ENCODE measurements at regions of chr21 and their contacts with region 1.

Region 1: GRCh38 chr21:37642493-37642892 is 273.8 kb downstream of the KCNJ6 start:
- DNase-seq: peak; percentile 36
- H3K4me3 ChIP-seq: no peak overlapping the region
- H3K27ac ChIP-seq: no peak overlapping the region
- H3K4me1 ChIP-seq: peaks cover 9% of the 10 kb centered on the region
- H3K27me3 ChIP-seq: no peaks in the 10 kb centered on the region
- CTCF ChIP-seq: peak; percentile 36 to 58

Region 2: DNA sequence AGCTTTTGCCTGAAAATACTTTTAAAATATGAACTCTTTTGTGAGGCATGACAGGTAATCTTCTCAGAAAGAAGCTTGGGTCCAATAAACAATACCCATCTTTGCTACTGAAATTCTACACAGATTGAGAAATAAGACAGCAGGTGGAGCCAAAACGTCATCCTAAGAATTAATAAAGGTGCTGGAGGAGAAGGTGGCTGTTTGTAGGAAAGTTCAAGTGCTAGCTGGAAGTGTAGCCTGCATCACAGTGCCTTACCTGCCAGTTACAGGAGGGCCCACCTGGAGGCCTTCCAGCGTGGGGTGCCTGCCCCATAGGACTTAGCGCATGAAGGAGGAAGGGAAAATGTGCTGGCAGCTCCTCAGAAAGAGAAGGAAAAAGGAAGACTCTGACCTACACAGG is 475.8 kb before region 1 on chr21:
- CTCF ChIA-PET with region 1: no interaction called
- dilution Hi-C with region 1: no loop called
- in situ Hi-C with region 1: no loop called
- intact Hi-C with region 1: loop called (anchors 1 kb)
- DNase-seq: peak; percentile 21
- H3K4me3 ChIP-seq: no peak overlapping the region
- H3K27ac ChIP-seq: no peak overlapping the region
- H3K4me1 ChIP-seq: no peaks in the 10 kb centered on the region
- H3K27me3 ChIP-seq: no peaks in the 10 kb centered on the region
- CTCF ChIP-seq: peak; percentile 15 to 32

Region 3: GRCh38 chr21:37220981-37221664 is 421.4 kb before region 1 on chr21:
- CTCF ChIA-PET with region 1: no interaction called
- dilution Hi-C with region 1: no loop called
- in situ Hi-C with region 1: no loop called
- intact Hi-C with region 1: loop called (anchors 2 kb)
- DNase-seq: peak; percentile 68
- H3K4me3 ChIP-seq: peak overlapping the region; percentile 59 to 75 (median 61)
- H3K27ac ChIP-seq: peak overlapping the region; percentile 26
- H3K4me1 ChIP-seq: peaks cover 6% of the 10 kb centered on the region
- H3K27me3 ChIP-seq: no peaks in the 10 kb centered on the region
- CTCF ChIP-seq: peak in 1 of 2 donors; percentile 42

Region 4: GRCh38 chr21:37267269-37268184 is 375.0 kb before region 1 on chr21 and contains the start of gene VPS26C:
- CTCF ChIA-PET with region 1: no interaction called
- dilution Hi-C with region 1: no loop called
- in situ Hi-C with region 1: loop called in 1 of 2 experiments (anchors 25 kb)
- intact Hi-C with region 1: no loop called
- DNase-seq: peak; percentile 100
- H3K4me3 ChIP-seq: peak within 1 kb of the TSS; percentile 61 to 80 (median 80)
- H3K27ac ChIP-seq: peak within 1 kb of the TSS; percentile 99
- H3K4me1 ChIP-seq: peaks cover 22% of the 10 kb centered on the region
- H3K27me3 ChIP-seq: no peaks in the 10 kb centered on the region
- CTCF ChIP-seq: no peak
- total RNA-seq, gene VPS26C: 46.2 to 54.8 TPM

Region 5: GRCh38 chr21:37496972-37497371 is 145.5 kb before region 1 on chr21:
- CTCF ChIA-PET with region 1: no interaction called
- dilution Hi-C with region 1: no loop called
- in situ Hi-C with region 1: no loop called
- intact Hi-C with region 1: loop called (anchors 1 kb)
- DNase-seq: no peak
- H3K4me3 ChIP-seq: no peak overlapping the region
- H3K27ac ChIP-seq: no peak overlapping the region
- H3K4me1 ChIP-seq: no peaks in the 10 kb centered on the region
- H3K27me3 ChIP-seq: no peaks in the 10 kb centered on the region
- CTCF ChIP-seq: peak in 1 of 2 donors; percentile 37

Region 6: GRCh38 chr21:37606549-37606948 is 35.9 kb before region 1 on chr21:
- CTCF ChIA-PET with region 1: no interaction called
- dilution Hi-C with region 1: no loop called
- in situ Hi-C with region 1: no loop called
- intact Hi-C with region 1: no loop called
- DNase-seq: no peak
- H3K4me3 ChIP-seq: no peak overlapping the region
- H3K27ac ChIP-seq: no peak overlapping the region
- H3K4me1 ChIP-seq: no peaks in the 10 kb centered on the region
- H3K27me3 ChIP-seq: peaks cover 4% of the 10 kb centered on the region
- CTCF ChIP-seq: no peak

Region 7: GRCh38 chr21:37619464-37619974 is 23.0 kb before region 1 on chr21:
- CTCF ChIA-PET with region 1: interaction called, 3 read pairs
- dilution Hi-C with region 1: no loop called
- in situ Hi-C with region 1: no loop called
- intact Hi-C with region 1: loop called (anchors 1 kb)
- DNase-seq: peak; percentile 79
- H3K4me3 ChIP-seq: no peak overlapping the region
- H3K27ac ChIP-seq: no peak overlapping the region
- H3K4me1 ChIP-seq: peaks cover 5% of the 10 kb centered on the region
- H3K27me3 ChIP-seq: no peaks in the 10 kb centered on the region
- CTCF ChIP-seq: peak; percentile 14 to 41

Measured in mammary epithelial cell (primary cell).